ENCODE measurements at regions of chr22 and their contacts with region 1.

Region 1: GRCh38 chr22:25465949-25466348 is 98.5 kb upstream of the GRK3 start:
- DNase-seq: no peak
- ATAC-seq: no peak
- H3K4me3 ChIP-seq: no peak overlapping the region
- H3K27ac ChIP-seq: no peak overlapping the region
- H3K4me1 ChIP-seq: no peaks in the 10 kb centered on the region
- H3K27me3 ChIP-seq: no peaks in the 10 kb centered on the region
- CTCF ChIP-seq: no peak

Region 2: DNA sequence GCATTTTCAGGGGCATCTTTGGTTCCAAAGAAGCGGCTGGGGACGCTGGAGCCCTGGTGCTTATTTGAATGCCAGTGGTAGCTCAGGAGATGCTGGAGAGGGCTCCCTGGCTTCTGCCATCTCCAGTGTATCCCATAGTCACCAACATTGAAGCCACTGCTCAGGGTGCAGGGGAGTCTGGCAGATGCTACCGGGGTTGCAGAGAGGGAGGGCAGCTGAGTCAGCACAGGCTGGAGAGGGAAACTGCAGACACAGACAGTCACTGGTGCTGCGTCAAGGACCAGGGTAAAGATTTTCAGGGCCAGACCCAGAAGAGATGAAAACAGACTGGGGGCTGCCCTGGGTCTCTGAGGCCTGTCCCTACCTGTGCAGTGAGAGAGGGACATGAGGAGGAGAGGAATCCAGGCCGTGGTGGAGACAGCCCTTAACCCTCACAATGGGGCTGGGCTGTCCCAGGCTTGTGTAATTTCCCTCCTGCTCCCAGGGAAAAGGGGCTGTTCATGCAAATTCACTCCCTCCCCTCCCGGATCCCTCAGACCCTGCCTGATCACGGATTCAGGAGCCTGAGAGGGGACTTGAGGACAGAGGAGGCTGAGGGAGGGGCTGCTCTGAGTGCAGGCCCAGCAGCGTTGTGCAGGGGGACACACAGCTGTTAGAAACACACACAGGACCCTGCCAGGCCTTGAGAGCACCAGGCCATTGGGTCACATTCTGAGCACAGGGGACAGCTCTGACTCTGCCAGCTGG is 28.4 kb before region 1 on chr22:
- intact Hi-C with region 1: no loop called
- DNase-seq: no peak
- ATAC-seq: no peak
- H3K4me3 ChIP-seq: no peak overlapping the region
- H3K27ac ChIP-seq: no peak overlapping the region
- H3K4me1 ChIP-seq: no peaks in the 10 kb centered on the region
- H3K27me3 ChIP-seq: no peaks in the 10 kb centered on the region
- CTCF ChIP-seq: no peak

Region 3: DNA sequence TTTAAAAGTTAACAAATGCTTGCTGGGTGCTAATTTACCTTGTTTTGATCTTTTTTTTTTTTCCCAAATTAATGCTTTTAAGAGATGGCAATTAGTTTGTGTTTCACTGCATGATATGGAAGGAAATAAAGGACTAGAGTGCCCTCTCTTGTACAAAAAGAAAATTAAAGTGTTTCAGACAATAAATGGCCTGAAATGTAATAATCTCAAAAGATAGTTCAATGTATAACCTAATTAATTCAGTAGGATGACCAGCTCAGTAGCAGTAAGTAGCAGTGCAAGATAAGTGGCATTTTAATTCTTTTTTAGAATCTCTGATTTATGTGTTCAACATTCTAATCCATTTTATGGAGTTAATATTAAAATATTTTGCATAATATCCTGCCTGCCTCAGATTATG is 236.1 kb after region 1 on chr22:
- intact Hi-C with region 1: loop called in 1 of 2 experiments (anchors 5 kb)
- DNase-seq: no peak
- ATAC-seq: peak in 1 of 4 donors; percentile 68
- H3K4me3 ChIP-seq: no peak overlapping the region
- H3K27ac ChIP-seq: no peak overlapping the region
- H3K4me1 ChIP-seq: peaks cover 11% of the 10 kb centered on the region
- H3K27me3 ChIP-seq: no peaks in the 10 kb centered on the region
- CTCF ChIP-seq: peak; percentile 42

Region 4: DNA sequence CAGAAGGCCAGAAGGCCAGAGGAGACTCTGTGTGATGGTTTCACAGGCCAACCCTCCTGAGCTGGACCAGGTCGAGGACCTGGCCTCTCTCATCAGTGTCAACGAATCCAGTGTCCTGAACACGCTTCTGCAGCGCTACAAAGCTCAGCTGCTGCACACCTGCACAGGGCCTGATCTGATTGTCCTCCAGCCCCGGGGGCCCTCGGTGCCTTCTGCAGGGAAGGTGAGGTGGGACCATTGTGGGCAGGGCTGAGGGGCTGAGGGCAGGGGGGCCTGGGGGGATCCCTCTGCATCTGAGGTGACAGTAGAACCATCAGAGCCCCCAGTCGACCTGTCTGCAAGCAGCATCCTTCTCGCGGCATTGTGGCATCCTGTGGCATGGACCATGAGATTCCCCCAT is 306.3 kb after region 1 on chr22:
- intact Hi-C with region 1: loop called (anchors 2 to 5 kb)
- DNase-seq: peak in 1 of 2 donors; percentile 35
- ATAC-seq: peak in 3 of 4 donors; percentile 2 to 20 (median 10)
- H3K4me3 ChIP-seq: no peak overlapping the region
- H3K27ac ChIP-seq: no peak overlapping the region
- H3K4me1 ChIP-seq: no peaks in the 10 kb centered on the region
- H3K27me3 ChIP-seq: no peaks in the 10 kb centered on the region
- CTCF ChIP-seq: no peak

Region 5: DNA sequence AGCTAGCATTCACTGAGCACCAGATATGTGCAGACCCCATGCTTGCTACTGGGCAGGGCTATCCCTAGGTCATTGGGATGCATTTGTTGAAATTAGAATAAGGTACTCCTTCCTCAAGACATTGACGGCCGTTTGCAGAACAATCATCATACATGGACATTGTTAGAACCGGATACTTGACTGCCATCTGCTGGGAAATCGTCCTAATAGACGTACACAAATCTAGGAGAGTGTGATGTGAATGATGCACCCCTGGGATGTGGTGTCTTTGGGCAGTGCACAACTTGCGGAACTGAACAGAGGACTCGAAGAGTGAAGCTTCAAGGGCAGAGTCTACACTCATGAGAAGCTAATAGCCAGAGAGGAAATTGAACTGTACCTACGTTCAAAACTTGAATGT is 311.9 kb after region 1 on chr22:
- intact Hi-C with region 1: loop called (anchors 2 to 5 kb)
- DNase-seq: peak in 1 of 2 donors; percentile 35
- ATAC-seq: peak in 3 of 4 donors; percentile 17 to 43 (median 19)
- H3K4me3 ChIP-seq: no peak overlapping the region
- H3K27ac ChIP-seq: no peak overlapping the region
- H3K4me1 ChIP-seq: no peaks in the 10 kb centered on the region
- H3K27me3 ChIP-seq: no peaks in the 10 kb centered on the region
- CTCF ChIP-seq: peak; percentile 14